ENCODE measurements at regions of chrX and their contacts with region 1.

Region 1: DNA sequence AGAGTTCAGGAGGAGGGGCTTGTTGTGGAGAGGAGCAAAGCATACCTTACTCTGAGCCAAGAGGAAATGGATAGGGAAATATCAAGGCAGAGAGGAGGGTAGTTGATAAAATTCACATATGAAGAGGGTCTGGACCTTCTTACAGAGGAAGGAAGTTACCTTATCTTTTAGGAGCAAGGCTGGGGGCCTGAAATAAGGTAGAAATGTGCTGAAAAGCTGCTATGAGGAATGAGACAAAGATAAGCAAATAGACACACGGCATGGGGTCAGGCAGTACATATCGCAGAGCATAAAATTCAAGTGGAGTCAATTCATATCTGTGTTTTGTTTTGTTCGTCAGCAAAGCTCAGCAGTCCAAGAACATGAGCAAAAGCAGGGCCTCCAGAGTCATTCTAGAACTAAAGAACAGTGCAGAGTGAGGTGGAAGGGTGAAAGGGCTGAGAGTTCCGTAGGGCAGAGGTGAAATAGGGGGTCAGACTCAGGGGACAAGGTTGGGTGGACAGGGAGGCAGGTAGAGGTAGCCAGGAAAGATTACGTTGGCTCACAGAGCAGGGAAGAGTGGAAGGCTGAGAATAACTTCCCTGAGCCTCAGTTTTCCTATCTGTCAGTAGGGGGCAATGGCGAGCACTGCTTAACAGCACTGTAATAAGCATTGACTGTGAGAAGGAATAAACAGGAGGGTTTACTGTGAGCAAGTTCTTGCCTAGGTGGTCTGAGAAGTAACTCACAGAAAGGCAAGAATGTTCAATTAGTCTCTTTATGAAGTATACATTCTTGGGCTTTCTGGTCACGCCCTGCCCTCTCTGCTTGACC is 9.2 kb downstream of the VSIG4 start:
- DNase-seq: peak; percentile 42
- ATAC-seq: peak; percentile 77
- H3K4me3 Mint-ChIP-seq: no peak overlapping the region
- H3K27ac Mint-ChIP-seq: no peak overlapping the region
- H3K4me1 Mint-ChIP-seq: no peaks in the 10 kb centered on the region
- H3K27me3 Mint-ChIP-seq: no peaks in the 10 kb centered on the region

Region 2: DNA sequence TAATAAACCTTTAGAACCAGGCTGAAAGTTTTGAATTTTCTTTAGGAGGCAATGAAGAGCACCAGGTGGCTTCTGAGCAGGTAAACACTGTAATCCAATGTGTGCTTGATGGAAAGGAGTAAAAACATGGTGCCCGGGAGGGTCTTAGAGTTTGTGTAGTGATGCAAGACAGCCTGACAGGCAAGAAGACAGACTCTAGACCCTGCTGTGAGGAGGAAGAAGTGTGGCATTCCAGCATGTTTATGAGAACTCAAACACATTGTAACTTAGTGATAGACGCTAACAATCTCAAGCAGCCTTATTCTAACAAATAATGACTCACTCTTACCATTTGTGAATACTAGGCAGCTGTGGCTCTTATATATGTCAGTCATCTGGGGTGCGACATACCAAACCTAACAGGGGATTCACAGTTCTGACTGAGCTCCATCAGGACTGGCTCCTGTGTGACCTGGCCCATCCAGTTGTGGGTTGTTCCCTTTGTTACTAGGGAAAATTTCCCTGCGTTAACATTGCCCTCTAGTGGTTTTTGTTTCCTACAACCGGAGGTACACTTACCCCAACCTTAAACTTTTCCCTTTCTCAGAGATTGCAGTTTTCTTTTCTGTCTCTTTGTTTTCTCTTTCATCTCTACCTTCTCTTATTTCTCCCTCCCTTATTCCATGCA is 44.7 kb before region 1 on chrX:
- CTCF ChIA-PET with region 1: no interaction called
- POLR2A ChIA-PET with region 1: no interaction called
- intact Hi-C with region 1: no loop called
- DNase-seq: peak; percentile 65
- ATAC-seq: peak; percentile 100
- H3K4me3 Mint-ChIP-seq: no peak overlapping the region
- H3K27ac Mint-ChIP-seq: peak overlapping the region; percentile 69
- H3K4me1 Mint-ChIP-seq: peaks cover 21% of the 10 kb centered on the region
- H3K27me3 Mint-ChIP-seq: no peaks in the 10 kb centered on the region

Region 3: DNA sequence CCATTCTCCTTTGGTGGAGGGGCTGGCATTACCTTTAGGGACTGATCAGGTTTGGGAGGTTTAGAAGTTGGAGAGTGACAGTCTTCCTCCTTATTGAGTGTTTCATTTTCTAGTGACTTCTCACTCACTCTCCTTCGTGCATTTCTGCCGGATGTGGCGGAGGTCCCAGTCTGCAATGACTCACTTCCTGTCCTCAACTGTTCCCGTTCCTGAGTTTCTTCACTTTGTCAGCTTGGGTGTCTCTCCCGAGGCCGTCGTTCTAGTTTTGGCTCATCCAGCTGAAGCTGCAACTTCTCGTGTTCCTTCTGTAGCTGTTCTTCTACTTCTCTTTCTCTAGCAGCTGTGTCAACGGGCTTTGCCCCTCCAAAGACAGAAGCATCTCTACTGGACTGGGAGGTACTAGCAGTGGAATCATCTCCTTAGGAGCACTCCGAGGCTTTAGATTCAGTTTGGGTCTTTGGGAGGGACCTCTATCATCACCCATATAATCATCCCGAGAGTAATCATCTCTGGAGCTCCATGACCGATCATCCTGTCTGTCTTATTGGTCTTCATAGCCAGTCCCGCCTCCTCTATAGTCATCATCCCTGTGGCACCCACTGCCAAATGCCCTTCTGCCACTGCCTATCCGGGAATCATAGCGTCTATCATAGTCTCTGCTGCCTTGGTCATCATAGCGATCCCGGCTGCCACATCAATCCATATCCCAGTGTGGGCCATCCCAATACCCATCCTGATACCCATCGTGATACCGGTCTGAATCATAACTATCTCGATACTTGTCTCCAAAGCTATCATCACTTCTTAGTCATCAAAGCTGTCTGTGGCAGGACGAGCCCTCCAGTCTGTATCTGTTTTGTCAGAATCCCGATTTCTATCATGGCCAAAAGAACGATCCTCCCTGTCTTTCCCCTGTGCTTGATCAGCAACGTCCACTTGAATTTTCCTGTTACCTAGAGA is 44.5 kb after region 1 on chrX:
- CTCF ChIA-PET with region 1: no interaction called
- POLR2A ChIA-PET with region 1: no interaction called
- intact Hi-C with region 1: loop called in 1 of 2 experiments (anchors 5 kb)
- DNase-seq: peak; percentile 66
- ATAC-seq: peak; percentile 76
- H3K4me3 Mint-ChIP-seq: peak overlapping the region; percentile 58
- H3K27ac Mint-ChIP-seq: peak overlapping the region; percentile 90
- H3K4me1 Mint-ChIP-seq: peaks cover 26% of the 10 kb centered on the region
- H3K27me3 Mint-ChIP-seq: no peaks in the 10 kb centered on the region

Region 4: DNA sequence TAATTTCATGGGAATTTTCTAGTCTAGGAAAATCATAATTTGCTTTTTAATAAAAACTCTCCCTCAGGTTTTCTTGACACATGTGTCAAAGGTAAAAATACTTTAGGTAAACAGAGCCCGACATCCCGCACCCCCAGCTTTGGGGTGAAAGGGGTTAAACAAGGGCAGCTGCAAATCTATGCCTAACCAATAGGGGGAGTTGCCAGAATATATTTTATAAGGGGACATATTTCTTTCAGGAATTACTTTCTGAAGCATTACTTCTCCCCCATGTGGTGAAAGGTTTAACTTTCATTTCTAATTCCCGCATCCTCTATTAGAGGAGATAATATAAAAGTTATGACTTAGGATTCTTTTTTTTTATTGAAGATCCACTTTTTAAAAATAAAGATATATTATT is 79.4 kb after region 1 on chrX:
- CTCF ChIA-PET with region 1: interaction called, 3 read pairs
- POLR2A ChIA-PET with region 1: no interaction called
- intact Hi-C with region 1: loop called (anchors 1 to 5 kb)
- DNase-seq: peak; percentile 16
- ATAC-seq: no peak
- H3K4me3 Mint-ChIP-seq: no peak overlapping the region
- H3K27ac Mint-ChIP-seq: no peak overlapping the region
- H3K4me1 Mint-ChIP-seq: no peaks in the 10 kb centered on the region
- H3K27me3 Mint-ChIP-seq: no peaks in the 10 kb centered on the region